Natural killer cell (primary cell): ENCODE measurements at regions of chr13 and their contacts with region 1.

Region 1: GRCh38 chr13:49443704-49444523 is at the starts of genes CAB39L and SETDB2:
- DNase-seq: peak; percentile 98 to 99
- ATAC-seq: peak; percentile 84 to 97 (median 89)
- H3K4me3 ChIP-seq: peak within 1 kb of the TSS; percentile 55
- H3K4me3 Mint-ChIP-seq: peak within 1 kb of the TSS; percentile 98
- H3K27ac ChIP-seq: peak within 1 kb of the TSS; percentile 91
- H3K27ac Mint-ChIP-seq: peak within 1 kb of the TSS; percentile 96 to 97
- H3K4me1 ChIP-seq: peaks cover 17% of the 10 kb centered on the region
- H3K4me1 Mint-ChIP-seq: peaks cover 40 to 44% of the 10 kb centered on the region in 2 donors
- H3K27me3 ChIP-seq: no peaks in the 10 kb centered on the region
- H3K27me3 Mint-ChIP-seq: no peaks in the 10 kb centered on the region
- CTCF ChIP-seq: no peak
- total RNA-seq, gene CAB39L: 4.4 to 6.5 (median 6.0) TPM
- total RNA-seq, gene SETDB2: 15.8 to 17.4 (median 16.4) TPM

Region 2: GRCh38 chr13:48975856-48976575 is 467.9 kb before region 1 on chr13 and contains the start of gene FNDC3A:
- intact Hi-C with region 1: loop called (anchors 5 kb)
- DNase-seq: peak; percentile 81 to 92
- ATAC-seq: peak; percentile 78 to 92 (median 79)
- H3K4me3 ChIP-seq: peak within 1 kb of the TSS; percentile 65
- H3K4me3 Mint-ChIP-seq: peak within 1 kb of the TSS; percentile 98
- H3K27ac ChIP-seq: peak within 1 kb of the TSS; percentile 99
- H3K27ac Mint-ChIP-seq: peak within 1 kb of the TSS; percentile 90 to 96
- H3K4me1 ChIP-seq: peaks cover 7% of the 10 kb centered on the region
- H3K4me1 Mint-ChIP-seq: peaks cover 30 to 41% of the 10 kb centered on the region in 2 donors
- H3K27me3 ChIP-seq: no peaks in the 10 kb centered on the region
- H3K27me3 Mint-ChIP-seq: peaks cover 5 to 8% of the 10 kb centered on the region in 2 donors
- CTCF ChIP-seq: no peak
- total RNA-seq, gene FNDC3A: 38.3 to 46.0 (median 41.5) TPM

Region 3: DNA sequence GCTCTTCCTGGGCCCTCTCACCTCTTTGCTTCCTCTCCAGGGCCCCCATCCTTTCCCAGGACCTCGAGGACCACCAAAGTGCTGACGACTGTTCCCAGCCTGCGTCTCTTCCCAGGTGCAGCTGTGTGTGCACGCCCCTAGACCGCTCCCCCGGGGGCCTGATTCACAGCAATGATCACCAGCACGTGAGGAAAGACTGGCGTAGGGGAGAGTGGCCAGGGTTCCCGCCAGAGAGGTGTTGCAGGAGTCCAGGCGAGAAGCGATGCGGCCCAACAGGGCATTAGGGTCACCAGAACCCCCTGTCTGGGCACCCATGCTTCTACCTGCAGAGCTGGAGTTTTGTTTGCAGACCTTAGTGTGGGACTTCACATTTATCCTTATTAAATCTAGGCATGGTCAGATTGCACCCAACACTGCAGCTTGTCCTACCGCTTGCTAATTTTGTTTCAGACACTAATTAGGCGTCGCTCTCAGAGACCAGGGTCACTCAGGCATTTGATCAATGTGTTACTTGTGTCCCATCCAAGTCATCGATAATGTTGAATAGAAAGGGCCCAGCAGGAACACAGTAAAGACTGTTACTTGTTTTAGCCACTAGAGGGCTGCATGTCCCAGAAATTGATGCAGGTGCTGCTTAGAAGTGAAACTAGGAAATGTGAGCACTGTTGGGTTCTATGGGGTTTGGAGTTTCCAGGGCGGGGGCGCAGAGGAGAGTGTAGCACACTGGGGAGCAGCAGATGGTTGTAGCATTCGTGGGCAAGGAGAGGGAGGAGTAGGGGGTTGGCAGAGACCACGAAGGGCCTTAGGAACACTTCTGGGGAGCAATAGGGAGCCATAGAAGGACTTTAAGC is 142.9 kb before region 1 on chr13:
- intact Hi-C with region 1: loop called (anchors 5 kb)
- DNase-seq: peak; percentile 47 to 85
- ATAC-seq: peak; percentile 92 to 100 (median 99)
- H3K4me3 ChIP-seq: peak overlapping the region; percentile 28
- H3K4me3 Mint-ChIP-seq: peak overlapping the region; percentile 81
- H3K27ac ChIP-seq: no peak overlapping the region
- H3K27ac Mint-ChIP-seq: peak overlapping the region in 1 of 2 donors; percentile 82
- H3K4me1 ChIP-seq: peaks cover 6% of the 10 kb centered on the region
- H3K4me1 Mint-ChIP-seq: peaks cover 13 to 18% of the 10 kb centered on the region in 2 donors
- H3K27me3 ChIP-seq: no peaks in the 10 kb centered on the region
- H3K27me3 Mint-ChIP-seq: no peaks in the 10 kb centered on the region
- CTCF ChIP-seq: peak; percentile 82

Region 4: GRCh38 chr13:49792550-49793324 is 348.8 kb after region 1 on chr13 and contains the start of gene KPNA3:
- intact Hi-C with region 1: loop called (anchors 2 kb)
- DNase-seq: peak; percentile 90 to 98
- ATAC-seq: peak; percentile 87 to 96 (median 87)
- H3K4me3 ChIP-seq: peak within 1 kb of the TSS; percentile 66
- H3K4me3 Mint-ChIP-seq: peak within 1 kb of the TSS; percentile 94
- H3K27ac ChIP-seq: peak within 1 kb of the TSS; percentile 66
- H3K27ac Mint-ChIP-seq: peak within 1 kb of the TSS; percentile 95 to 96
- H3K4me1 ChIP-seq: peaks cover 14% of the 10 kb centered on the region
- H3K4me1 Mint-ChIP-seq: peaks cover 37 to 39% of the 10 kb centered on the region in 2 donors
- H3K27me3 ChIP-seq: no peaks in the 10 kb centered on the region
- H3K27me3 Mint-ChIP-seq: peaks cover 12 to 16% of the 10 kb centered on the region in 2 donors
- CTCF ChIP-seq: no peak
- total RNA-seq, gene KPNA3: 27.8 to 35.5 (median 29.8) TPM

Region 5: GRCh38 chr13:50421473-50422130 is 977.7 kb after region 1 on chr13:
- intact Hi-C with region 1: loop called (anchors 10 kb)
- DNase-seq: no peak
- ATAC-seq: peak in 1 of 3 donors; percentile 33
- H3K4me3 ChIP-seq: no peak overlapping the region
- H3K4me3 Mint-ChIP-seq: no peak overlapping the region
- H3K27ac ChIP-seq: peak overlapping the region; percentile 39
- H3K27ac Mint-ChIP-seq: peak overlapping the region; percentile 69 to 77
- H3K4me1 ChIP-seq: peaks cover 11% of the 10 kb centered on the region
- H3K4me1 Mint-ChIP-seq: peaks cover 13 to 14% of the 10 kb centered on the region in 2 donors
- H3K27me3 ChIP-seq: no peaks in the 10 kb centered on the region
- H3K27me3 Mint-ChIP-seq: no peaks in the 10 kb centered on the region
- CTCF ChIP-seq: no peak